ENCODE measurements at regions of chr10 and their contacts with region 1.

Region 1: DNA sequence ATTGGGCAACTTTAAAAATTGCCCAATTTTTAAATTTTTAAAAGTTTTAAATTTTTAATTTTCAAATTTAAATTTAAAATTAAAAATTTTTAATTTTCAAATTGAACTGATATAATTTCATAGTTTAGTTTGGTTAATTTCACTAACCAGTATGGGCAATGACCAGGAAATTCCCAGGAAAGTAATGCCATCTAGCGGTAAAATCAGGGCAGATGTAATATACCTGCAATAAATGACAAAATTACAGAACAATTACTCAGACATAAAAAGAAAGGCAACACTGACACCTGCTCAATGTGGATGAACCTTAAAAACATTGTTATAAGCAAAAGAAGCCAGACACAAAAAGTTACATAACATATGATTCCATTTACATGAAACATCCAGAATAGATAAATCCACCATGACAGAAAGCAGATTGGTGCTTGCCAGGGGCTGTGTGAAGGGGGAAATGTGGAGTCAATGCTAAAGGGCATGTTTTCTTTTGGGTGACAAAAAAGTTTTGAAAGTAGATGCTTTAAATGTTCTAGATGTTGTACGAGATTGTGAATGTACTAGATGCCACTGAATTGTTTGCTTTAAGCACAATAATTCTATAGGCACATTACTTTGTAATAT is 28.6 kb upstream of the SLC16A12 start:
- H3K4me3 ChIP-seq: no peak overlapping the region
- H3K27ac ChIP-seq: no peak overlapping the region
- H3K4me1 ChIP-seq: 0 out of 2 replicates have a peak, but pooled peaks cover 4% of the 10 kb centered on the region
- CTCF ChIP-seq: no peak

Region 2: GRCh38 chr10:89427629-89428028 is 136.3 kb before region 1 on chr10:
- CTCF ChIA-PET with region 1: interaction called, 16 read pairs
- POLR2A ChIA-PET with region 1: no interaction called
- H3K4me3 ChIP-seq: no peak overlapping the region
- H3K27ac ChIP-seq: no peak overlapping the region
- H3K4me1 ChIP-seq: no peaks in the 10 kb centered on the region
- CTCF ChIP-seq: no peak

Region 3: DNA sequence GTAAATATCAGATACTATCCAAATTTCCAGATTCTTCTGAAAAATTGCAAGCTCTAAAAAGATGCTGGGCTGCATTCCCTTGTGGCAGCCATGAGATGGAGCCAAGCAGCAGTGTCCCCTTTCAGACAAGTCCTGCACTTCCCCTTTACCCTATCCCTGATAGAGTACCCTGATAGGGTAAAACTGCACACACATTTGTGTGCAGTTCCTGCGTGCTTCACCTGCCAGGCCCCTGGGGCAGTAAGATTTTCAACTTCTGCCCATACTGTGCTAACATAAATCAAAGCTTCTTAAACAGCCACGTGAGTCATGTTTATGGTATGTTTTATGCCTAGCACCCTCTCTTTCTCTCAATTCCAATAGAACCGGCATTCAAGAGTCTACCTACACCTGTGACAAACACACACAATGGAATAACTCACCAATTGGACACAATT is 97.4 kb before region 1 on chr10:
- CTCF ChIA-PET with region 1: interaction called, 21 read pairs
- POLR2A ChIA-PET with region 1: no interaction called
- H3K4me3 ChIP-seq: no peak overlapping the region
- H3K27ac ChIP-seq: no peak overlapping the region
- H3K4me1 ChIP-seq: no peaks in the 10 kb centered on the region; the same call in 1 of the 2 replicates
- CTCF ChIP-seq: peak; percentile 47; the same call in 1 of the 2 replicates

Measured in HEK293 (cell line).